Activated naive CD4-positive, alpha-beta T cell treated with anti-CD3 and anti-CD28 coated beads, Interleukin-2, amount 10 ng/mL, durations not matched to agents 7 days and 5 days (primary cell): ENCODE measurements at regions of chr7 and their contacts with region 1.

Region 1: DNA sequence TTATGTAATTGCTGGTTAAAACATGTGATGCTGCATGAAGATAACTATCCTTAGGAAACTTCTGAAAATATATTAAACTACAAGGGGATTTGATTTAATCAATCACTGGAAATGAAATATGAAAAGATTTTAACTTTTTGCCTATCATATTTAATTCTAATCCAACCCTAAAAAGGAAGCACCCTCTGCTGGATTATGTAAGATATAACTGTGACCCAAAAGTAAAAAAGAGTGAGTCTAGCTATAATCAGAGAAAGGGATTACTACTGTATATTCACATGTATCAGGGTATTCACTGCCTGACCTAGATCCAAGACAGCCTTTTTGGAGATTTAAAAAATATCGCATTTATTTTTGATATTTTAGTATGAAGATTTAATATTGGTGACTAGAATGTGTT is 295.5 kb downstream of the MDFIC start:
- DNase-seq: no peak
- H3K4me3 Mint-ChIP-seq: no peak overlapping the region
- H3K27ac Mint-ChIP-seq: no peak overlapping the region
- H3K4me1 Mint-ChIP-seq: peaks cover 14% of the 10 kb centered on the region
- H3K27me3 Mint-ChIP-seq: no peaks in the 10 kb centered on the region

Region 2: GRCh38 chr7:114865564-114865963 is 351.8 kb before region 1 on chr7:
- CTCF ChIA-PET with region 1: interaction called, 71 read pairs
- DNase-seq: peak; percentile 75
- H3K4me3 Mint-ChIP-seq: no peak overlapping the region
- H3K27ac Mint-ChIP-seq: no peak overlapping the region
- H3K4me1 Mint-ChIP-seq: peaks cover 7% of the 10 kb centered on the region
- H3K27me3 Mint-ChIP-seq: peaks cover 3% of the 10 kb centered on the region

Region 3: DNA sequence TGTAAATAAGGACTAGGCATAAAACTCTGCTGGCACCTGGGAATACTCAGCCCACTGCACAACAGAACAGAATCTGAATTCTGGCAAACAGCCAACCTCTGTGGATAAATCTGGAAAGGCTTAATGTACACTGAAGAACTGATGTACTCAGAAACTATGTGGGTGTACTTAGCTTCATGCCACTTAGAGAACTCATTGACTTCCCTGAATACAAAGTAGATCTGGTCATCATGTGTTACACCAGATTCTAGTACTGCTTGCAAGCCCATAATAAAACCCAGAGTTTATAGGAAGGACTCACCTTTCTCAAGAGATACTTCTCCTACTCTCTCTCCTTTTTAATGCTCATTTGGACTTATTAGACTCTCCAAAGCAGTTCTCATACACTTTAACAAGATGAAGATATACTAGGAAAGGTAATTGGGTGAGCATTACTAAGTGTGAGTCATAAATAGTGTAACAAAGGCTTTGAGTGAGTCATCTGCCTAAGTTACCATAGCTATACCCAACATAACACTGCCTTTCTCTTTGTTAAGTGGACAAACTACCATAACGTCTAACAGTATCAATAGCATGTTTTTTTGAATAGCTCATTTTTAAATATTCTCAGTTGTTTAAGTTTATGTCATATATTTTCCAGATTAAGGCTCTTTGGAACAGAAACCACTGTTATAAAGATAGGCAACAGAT is 13.7 kb after region 1 on chr7:
- CTCF ChIA-PET with region 1: interaction called, 13 read pairs
- DNase-seq: no peak
- H3K4me3 Mint-ChIP-seq: no peak overlapping the region
- H3K27ac Mint-ChIP-seq: no peak overlapping the region
- H3K4me1 Mint-ChIP-seq: peaks cover 20% of the 10 kb centered on the region
- H3K27me3 Mint-ChIP-seq: peaks cover 5% of the 10 kb centered on the region

Region 4: GRCh38 chr7:115271332-115272235 is 54.2 kb after region 1 on chr7:
- CTCF ChIA-PET with region 1: no interaction called
- DNase-seq: no peak
- H3K4me3 Mint-ChIP-seq: no peak overlapping the region
- H3K27ac Mint-ChIP-seq: no peak overlapping the region
- H3K4me1 Mint-ChIP-seq: no peaks in the 10 kb centered on the region
- H3K27me3 Mint-ChIP-seq: no peaks in the 10 kb centered on the region